Aorta (tissue), 5 donors: ENCODE measurements at regions of chr11 and their contacts with region 1.

Region 1: DNA sequence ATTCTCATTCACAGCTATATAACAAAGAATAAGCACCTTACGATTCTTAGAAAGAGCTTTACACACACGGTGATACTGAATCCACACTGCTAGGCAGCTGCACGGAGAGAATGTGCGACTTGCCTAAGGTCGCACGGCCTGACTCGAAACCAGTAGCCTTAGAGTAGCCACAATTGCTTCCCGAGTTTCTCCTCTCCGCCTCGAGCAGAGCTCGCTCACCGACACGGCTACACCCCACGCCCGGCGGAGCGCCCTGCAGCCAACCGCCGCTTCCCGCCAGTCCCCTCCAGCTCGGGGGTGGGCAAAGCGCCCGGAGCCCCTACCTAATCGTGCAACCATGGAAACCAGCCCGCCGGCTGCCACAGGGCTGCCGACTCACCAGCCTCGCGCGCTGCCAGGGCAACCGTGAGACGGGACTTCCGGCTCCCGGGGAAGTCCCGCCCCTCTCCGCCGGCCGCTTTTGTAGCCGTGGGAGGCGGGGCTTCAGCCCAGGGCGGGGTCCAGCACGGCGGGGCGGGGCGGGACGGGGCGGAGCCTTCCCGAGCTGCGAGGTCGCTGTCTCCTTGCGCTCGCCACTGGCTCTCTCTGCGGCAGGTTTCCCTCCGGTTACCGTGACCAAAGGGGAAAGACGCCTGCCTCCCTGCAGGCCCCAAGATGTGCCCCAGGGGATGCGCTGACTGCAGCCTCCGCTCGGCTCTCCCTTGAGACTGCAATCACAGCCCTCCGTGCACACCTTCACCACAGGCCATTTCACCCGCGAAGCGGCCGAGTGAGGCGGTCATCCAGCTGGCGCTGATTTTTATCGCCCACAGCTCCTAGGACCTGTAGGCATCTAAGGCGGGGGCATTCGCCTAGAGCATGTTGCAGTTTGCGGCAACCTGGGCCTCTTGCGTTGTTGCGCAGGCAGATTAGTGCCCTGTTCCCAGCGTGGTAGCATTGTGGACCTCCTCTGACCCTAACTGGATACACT is 1.1 kb downstream of the BSCL2 start:
- DNase-seq: peak; percentile 97 to 99
- ATAC-seq: peak; percentile 95
- H3K4me3 ChIP-seq: peak overlapping the region; percentile 49 to 65
- H3K27ac ChIP-seq: peak overlapping the region in 1 of 2 donors; percentile 76
- H3K4me1 ChIP-seq: no peaks in the 10 kb centered on the region
- H3K27me3 ChIP-seq: no peaks in the 10 kb centered on the region

Region 2: DNA sequence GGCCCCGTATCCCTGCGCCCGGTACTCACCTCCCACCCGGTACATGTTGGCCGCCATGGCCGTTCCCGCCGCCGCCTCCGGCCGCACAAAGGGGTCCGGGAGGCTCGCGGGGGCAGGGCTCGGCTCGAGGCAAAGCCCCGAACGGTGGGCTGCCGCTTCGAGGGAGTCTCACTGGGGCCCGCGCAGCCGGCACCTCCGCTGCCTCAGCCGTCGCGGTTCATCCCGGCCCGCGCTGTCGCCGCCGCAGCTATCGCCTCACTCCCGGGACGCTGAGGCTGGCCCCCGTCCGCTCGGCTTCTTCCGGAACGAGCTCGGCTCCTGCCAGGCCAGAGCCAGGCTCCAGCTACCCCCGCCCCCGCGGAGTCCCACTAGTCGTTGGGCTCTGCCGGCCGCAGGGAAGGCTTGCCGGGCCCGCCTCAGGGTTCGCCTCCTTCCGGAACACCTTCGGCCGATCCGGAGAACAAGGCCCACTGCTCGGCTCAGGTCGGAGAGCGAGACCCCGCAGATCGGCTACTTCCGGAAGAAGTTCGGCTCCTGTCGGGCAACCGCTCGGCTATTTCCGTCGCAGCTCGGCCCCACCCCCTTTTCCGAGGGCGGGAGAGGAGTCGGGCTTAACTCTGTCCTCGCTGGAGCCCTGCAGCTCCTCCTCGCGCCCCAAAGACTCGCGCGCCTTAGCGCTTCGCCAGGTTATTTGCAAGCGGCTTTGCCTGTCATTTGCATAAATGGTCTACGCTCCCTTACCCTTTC is 104.6 kb before region 1 on chr11 and contains the start of gene MTA2:
- intact Hi-C with region 1: loop called in 1 of 2 experiments (anchors 5 kb)
- DNase-seq: peak; percentile 98 to 99
- ATAC-seq: peak; percentile 95
- H3K4me3 ChIP-seq: peak within 1 kb of the TSS; percentile 72 to 73
- H3K27ac ChIP-seq: peak within 1 kb of the TSS; percentile 20 to 82
- H3K4me1 ChIP-seq: no peaks in the 10 kb centered on the region
- H3K27me3 ChIP-seq: no peaks in the 10 kb centered on the region
- total RNA-seq, gene MTA2: 80.1 to 87.9 TPM

Region 3: DNA sequence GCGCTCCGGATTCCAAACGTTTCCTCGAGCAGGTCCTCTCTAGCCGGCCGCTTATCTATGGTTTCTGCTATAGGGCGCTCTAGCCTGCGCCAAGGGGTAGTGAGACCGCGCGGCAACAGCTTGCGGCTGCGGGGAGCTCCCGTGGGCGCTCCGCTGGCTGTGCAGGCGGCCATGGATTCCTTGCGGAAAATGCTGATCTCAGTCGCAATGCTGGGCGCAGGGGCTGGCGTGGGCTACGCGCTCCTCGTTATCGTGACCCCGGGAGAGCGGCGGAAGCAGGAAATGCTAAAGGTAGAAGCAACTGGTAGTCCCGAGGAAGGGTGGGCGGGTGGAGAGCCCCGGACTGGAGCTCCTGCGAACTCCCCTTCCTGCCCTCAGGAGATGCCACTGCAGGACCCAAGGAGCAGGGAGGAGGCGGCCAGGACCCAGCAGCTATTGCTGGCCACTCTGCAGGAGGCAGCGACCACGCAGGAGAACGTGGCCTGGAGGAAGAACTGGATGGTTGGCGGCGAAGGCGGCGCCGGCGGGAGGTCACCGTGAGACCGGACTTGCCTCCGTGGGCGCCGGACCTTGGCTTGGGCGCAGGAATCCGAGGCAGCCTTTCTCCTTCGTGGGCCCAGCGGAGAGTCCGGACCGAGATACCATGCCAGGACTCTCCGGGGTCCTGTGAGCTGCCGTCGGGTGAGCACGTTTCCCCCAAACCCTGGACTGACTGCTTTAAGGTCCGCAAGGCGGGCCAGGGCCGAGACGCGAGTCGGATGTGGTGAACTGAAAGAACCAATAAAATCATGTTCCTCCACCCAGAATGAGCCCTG is 34.4 kb before region 1 on chr11 and contains the starts of genes LBHD1 and UQCC3:
- intact Hi-C with region 1: loop called in 1 of 2 experiments (anchors 5 kb)
- DNase-seq: peak; percentile 82 to 89
- ATAC-seq: peak; percentile 92
- H3K4me3 ChIP-seq: peak within 1 kb of the TSS; percentile 61 to 84
- H3K27ac ChIP-seq: peak within 1 kb of the TSS; percentile 1 to 63
- H3K4me1 ChIP-seq: peaks cover 0 to 1% of the 10 kb centered on the region in 2 donors
- H3K27me3 ChIP-seq: no peaks in the 10 kb centered on the region
- total RNA-seq, gene LBHD1: 3.6 to 8.6 TPM
- total RNA-seq, gene UQCC3: 3.0 to 4.8 TPM